ENCODE measurements at regions of chr18 and their contacts with region 1.

Region 1: DNA sequence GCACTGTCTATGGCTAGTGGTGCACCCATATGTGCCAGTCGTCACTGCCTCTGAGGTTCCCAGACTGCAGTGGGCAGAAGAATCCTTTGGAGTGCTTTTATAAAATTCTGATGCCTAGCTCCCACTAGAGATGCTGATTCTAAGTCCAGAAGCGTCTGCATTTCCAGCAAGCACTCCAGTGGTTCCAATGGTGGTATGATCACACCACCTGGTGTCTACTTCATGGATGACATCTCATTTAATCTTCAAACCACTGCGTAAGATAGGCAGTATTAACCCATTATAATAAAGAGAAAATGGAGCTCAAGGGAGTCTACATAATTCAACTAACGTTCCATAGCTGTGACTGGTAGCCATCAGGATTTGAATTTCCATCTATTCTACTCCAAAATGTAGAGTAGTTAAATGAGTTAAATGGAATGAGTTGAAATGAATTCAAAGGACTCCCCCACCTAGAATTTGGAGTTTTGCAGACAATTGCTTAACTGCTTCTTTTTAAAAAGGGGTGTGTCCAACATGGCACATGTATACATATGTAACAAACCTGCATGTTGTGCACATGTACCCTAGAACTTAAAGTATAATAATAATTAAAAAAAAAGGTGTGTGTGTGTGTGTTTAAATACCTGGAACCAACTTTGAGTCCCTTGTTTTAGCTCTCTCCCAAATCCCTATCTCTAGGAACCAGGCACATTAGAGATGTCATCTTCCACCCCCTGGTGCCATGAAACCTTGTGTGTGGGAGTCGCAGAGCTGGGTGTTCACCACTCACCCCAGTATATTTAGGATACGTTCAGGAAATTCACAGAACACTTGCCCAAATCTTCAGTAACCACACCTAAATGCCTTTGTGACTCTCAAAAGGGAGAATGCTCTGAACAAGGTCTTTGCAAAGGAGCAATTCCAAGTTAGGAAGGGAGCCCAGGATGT is 14.1 kb downstream of the LAMA3 start:
- DNase-seq: peak; percentile 76
- H3K4me3 Mint-ChIP-seq: no peak overlapping the region
- H3K27ac Mint-ChIP-seq: no peak overlapping the region
- H3K4me1 Mint-ChIP-seq: no peaks in the 10 kb centered on the region
- H3K27me3 Mint-ChIP-seq: peaks cover 36% of the 10 kb centered on the region

Region 2: DNA sequence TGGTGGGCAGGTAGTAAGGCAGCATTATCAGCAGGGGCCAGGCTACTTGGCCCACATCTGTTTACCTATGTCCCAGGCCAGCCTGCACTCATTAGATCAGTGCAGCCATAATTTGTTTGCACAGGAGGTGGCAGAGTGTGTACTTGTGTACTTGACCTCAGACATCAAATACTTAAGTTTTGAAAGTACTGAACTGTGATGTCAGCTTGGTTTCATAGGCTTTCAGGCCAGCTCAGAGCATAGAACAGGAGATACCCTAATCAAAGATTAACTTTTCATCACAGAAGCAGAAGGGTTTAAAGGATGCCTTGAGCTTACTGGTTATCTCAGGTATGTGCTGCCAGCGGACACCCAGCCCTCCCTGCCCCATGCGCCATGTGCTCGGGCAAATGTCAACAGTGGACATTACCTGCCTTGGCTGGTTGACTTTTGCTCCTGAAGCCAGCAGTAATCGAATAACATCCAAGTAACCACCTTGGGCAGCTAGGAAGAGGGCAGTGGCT is 73.8 kb before region 1 on chr18:
- intact Hi-C with region 1: loop called (anchors 10 kb)
- DNase-seq: peak; percentile 59
- H3K4me3 Mint-ChIP-seq: no peak overlapping the region
- H3K27ac Mint-ChIP-seq: no peak overlapping the region
- H3K4me1 Mint-ChIP-seq: peaks cover 10% of the 10 kb centered on the region
- H3K27me3 Mint-ChIP-seq: peaks cover 12% of the 10 kb centered on the region